Kidney (tissue), 22 donors: ENCODE measurements at regions of chr1 and their contacts with region 1.

Region 1: GRCh38 chr1:9455487-9456234 is 83.6 kb upstream of the SLC25A33 start:
- DNase-seq: peak; percentile 78 to 90 (median 82)
- H3K4me3 ChIP-seq: no peak overlapping the region
- H3K27ac ChIP-seq: no peak overlapping the region
- H3K4me1 ChIP-seq: peaks cover 6 to 19% (median 9%) of the 10 kb centered on the region in 3 donors
- H3K27me3 ChIP-seq: no peaks in the 10 kb centered on the region
- CTCF ChIP-seq: peak; percentile 46

Region 2: GRCh38 chr1:9289090-9289534 is 166.5 kb before region 1 on chr1:
- intact Hi-C with region 1: loop called (anchors 10 kb)
- DNase-seq: peak; percentile 50 to 71 (median 54)
- H3K4me3 ChIP-seq: no peak overlapping the region
- H3K27ac ChIP-seq: no peak overlapping the region
- H3K4me1 ChIP-seq: peaks cover 0 to 8% (median 4%) of the 10 kb centered on the region in 3 donors
- H3K27me3 ChIP-seq: no peaks in the 10 kb centered on the region
- CTCF ChIP-seq: peak; percentile 93

Region 3: GRCh38 chr1:9350013-9350908 is 105.4 kb before region 1 on chr1:
- intact Hi-C with region 1: loop called (anchors 10 kb)
- DNase-seq: peak in 2 of 5 donors; percentile 51 to 55
- H3K4me3 ChIP-seq: no peak overlapping the region
- H3K27ac ChIP-seq: no peak overlapping the region
- H3K4me1 ChIP-seq: peaks cover 0 to 7% (median 6%) of the 10 kb centered on the region in 3 donors
- H3K27me3 ChIP-seq: no peaks in the 10 kb centered on the region
- CTCF ChIP-seq: no peak

Region 4: DNA sequence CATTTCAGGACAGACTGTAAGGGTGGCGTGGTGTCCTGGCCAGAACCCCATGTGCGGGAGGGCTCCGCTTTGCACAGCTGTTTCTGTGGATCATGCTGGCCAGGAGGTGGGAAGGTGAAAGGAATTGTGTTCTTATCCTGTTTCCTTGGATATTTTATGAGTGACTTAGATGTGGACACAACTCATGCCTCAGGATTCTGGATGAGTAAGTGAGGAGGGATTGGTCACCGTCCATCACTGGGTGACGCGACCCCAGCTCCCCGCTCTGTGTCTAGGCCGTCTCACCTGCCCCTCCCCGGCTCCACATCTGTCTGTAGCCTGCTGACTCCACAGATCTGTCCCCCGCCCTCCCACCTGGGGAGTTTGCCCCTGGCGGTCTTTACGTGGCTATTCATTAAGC is 244.7 kb after region 1 on chr1:
- intact Hi-C with region 1: no loop called
- DNase-seq: no peak
- H3K4me3 ChIP-seq: no peak overlapping the region
- H3K27ac ChIP-seq: no peak overlapping the region
- H3K4me1 ChIP-seq: no peaks in the 10 kb centered on the region
- H3K27me3 ChIP-seq: no peaks in the 10 kb centered on the region
- CTCF ChIP-seq: no peak